Brain microvascular endothelial cell (primary cell): ENCODE measurements at regions of chr2 and their contacts with region 1.

Region 1: DNA sequence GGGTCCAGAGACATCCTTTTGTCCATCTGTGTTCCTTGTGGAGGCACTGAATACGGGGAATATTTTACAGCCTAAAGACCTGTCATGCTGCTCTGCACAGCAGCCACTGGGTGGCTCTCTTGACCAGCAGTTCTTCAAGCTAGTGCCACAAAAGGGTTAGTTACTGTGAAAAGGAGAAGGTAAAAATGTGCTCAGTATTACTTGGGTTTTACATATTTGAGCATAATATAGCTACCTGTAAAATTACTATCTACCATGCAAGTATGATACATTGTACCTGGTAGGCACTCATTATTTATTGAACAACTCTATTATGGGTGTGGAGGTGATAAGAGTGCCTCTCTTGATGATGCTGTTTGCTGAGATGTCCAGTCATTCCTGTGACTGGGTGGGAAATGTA is 23.6 kb downstream of the FZD5 start:
- DNase-seq: peak; percentile 56
- H3K4me3 ChIP-seq: no peak overlapping the region
- H3K27ac ChIP-seq: no peak overlapping the region
- H3K27me3 ChIP-seq: no peaks in the 10 kb centered on the region
- CTCF ChIP-seq: peak; percentile 97

Region 2: GRCh38 chr2:207473049-207473930 is 272.8 kb before region 1 on chr2:
- in situ Hi-C with region 1: no loop called
- DNase-seq: peak; percentile 86
- H3K4me3 ChIP-seq: no peak overlapping the region
- H3K27ac ChIP-seq: peak overlapping the region; percentile 61
- H3K27me3 ChIP-seq: no peaks in the 10 kb centered on the region
- CTCF ChIP-seq: peak; percentile 90

Region 3: GRCh38 chr2:207529330-207530159 is 216.6 kb before region 1 on chr2 and contains the start of gene CREB1:
- in situ Hi-C with region 1: no loop called
- DNase-seq: peak; percentile 99
- H3K4me3 ChIP-seq: peak within 1 kb of the TSS; percentile 92
- H3K27ac ChIP-seq: peak within 1 kb of the TSS; percentile 94
- H3K27me3 ChIP-seq: no peaks in the 10 kb centered on the region
- CTCF ChIP-seq: no peak

Region 4: DNA sequence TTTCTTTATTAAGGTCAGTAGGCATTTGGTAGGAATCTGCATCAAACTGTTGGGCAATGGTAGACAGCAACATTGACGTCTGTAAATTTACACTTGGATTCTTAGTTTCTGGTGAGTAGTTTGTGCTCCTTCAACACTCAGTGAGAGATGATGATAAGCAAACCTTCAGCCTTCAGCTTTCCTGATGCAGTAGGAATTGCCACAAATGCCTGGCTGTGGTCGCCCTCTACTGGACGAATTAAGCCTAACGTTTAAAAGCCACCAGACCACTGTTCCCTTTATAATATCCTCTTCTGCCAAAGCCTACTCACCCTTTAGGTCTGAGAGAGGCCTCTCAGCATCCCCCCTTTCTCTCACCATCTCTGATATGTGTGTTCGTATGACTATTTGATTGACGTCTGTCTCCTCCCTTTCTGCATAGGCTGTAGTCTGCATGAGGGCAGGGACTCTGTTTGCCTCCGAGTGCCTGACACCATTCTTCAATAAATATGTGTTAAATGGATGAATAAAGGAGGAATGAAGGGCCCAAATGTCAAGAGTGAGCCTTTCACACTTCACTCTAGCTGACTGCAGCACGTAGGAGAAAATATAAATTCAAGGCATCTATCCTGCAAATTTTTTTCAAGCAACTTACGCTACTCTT is 326.2 kb after region 1 on chr2:
- in situ Hi-C with region 1: loop called (anchors 25 kb)
- DNase-seq: peak; percentile 84
- H3K4me3 ChIP-seq: no peak overlapping the region
- H3K27ac ChIP-seq: no peak overlapping the region
- H3K27me3 ChIP-seq: no peaks in the 10 kb centered on the region
- CTCF ChIP-seq: peak; percentile 85